Breast epithelium (tissue), 4 donors: ENCODE measurements at regions of chr7 and their contacts with region 1.

Region 1: DNA sequence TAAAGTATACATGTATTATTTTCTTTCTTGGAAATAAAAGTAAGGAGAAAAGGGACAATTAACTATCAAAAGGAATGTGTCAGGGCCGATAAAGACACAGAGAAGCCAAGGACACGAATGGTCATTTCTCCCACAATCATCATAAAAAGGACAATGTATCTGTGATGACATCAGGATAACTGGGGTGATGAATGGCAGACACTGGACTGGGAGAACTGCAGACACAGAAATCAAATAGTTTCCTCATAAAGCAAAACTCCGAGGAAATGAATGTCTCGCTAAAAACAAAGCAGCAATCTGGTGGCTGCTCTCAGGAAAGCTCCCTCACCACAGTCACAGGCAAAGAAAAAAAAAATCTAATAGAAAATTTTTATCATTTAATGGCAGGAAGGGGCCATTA is 69.3 kb upstream of the NPY start:
- DNase-seq: no peak
- H3K4me3 ChIP-seq: no peak overlapping the region
- H3K27ac ChIP-seq: no peak overlapping the region
- H3K4me1 ChIP-seq: no peaks in the 10 kb centered on the region
- H3K27me3 ChIP-seq: no peaks in the 10 kb centered on the region
- CTCF ChIP-seq: no peak
- POLR2A ChIP-seq: no peak

Region 2: GRCh38 chr7:24172856-24173255 is 41.8 kb before region 1 on chr7:
- intact Hi-C with region 1: loop called (anchors 2 kb)
- DNase-seq: no peak
- H3K4me3 ChIP-seq: no peak overlapping the region
- H3K27ac ChIP-seq: no peak overlapping the region
- H3K4me1 ChIP-seq: no peaks in the 10 kb centered on the region
- H3K27me3 ChIP-seq: no peaks in the 10 kb centered on the region
- CTCF ChIP-seq: no peak
- POLR2A ChIP-seq: no peak